ENCODE measurements at regions of chr9 and their contacts with region 1.

Region 1: GRCh38 chr9:84697509-84698114 is 28.1 kb downstream of the NTRK2 start:
- DNase-seq: peak; percentile 83
- H3K4me3 ChIP-seq: no peak overlapping the region
- H3K27ac ChIP-seq: no peak overlapping the region
- H3K4me1 ChIP-seq: no peaks in the 10 kb centered on the region
- H3K27me3 ChIP-seq: no peaks in the 10 kb centered on the region
- CTCF ChIP-seq: peak; percentile 64

Region 2: DNA sequence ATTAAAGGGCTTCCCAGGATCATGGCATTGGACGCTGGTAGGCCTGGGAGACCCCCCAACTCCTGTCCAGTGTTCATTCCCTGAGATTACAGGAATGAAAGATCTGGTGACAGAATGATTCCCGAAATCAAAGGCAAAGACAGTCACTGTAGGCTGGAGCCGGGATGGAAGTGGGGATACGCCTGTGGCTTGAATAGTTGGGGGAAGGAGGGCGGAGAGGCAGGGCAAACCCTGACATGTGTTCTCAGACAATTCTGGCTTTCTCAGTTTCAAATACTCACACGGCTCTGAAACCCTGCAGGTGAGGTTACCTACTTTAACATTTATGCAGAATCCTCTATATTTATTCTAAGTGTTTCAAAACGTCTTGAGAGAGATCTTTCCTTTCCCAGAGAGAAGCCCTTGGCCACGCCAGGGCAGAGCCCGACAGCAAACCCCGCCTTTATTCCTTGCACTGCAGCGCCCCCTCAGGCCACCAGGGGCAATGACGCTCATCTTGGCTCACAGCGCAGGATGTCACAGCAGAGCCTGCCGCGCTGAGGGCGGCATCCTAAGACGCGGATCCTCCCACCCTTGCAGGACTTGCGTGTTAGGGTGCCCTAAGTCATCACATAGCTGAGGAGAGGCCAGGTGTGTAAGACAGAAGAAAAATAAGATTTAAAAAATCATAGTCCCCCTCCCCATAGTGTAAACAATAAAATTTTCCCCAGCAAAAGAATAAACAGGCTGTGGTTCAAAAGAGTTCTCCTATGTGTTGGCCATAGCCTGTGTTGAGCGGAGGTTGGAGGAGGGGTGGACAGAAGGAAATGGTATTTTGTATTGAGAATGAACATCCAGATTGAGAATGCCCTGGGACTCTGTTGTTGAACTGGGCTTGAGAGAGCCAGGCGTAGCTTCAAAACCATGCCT is 256.4 kb after region 1 on chr9:
- intact Hi-C with region 1: loop called (anchors 2 kb)
- DNase-seq: peak; percentile 86
- H3K4me3 ChIP-seq: no peak overlapping the region
- H3K27ac ChIP-seq: no peak overlapping the region
- H3K4me1 ChIP-seq: no peaks in the 10 kb centered on the region
- H3K27me3 ChIP-seq: no peaks in the 10 kb centered on the region
- CTCF ChIP-seq: peak; percentile 93

Region 3: DNA sequence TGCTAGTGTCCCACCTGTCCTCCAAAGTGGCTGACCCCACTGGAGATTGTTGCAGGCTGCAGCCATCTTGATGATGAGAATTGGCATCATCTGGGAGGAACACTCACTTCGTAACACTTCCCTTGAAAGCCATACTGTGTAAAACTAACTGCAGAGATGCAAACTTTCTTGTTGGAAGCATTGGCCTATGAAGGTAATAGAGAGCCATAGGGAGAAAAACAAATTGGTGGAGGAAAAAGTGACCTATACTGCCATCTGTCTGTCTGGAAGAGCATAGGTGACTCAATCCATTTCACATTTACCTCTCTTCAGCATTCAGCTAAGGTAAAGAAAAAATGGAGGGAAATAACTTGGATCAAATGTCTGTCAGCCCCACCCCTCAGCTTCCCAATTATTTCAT is 445.4 kb after region 1 on chr9:
- intact Hi-C with region 1: loop called (anchors 10 kb)
- DNase-seq: no peak
- H3K4me3 ChIP-seq: no peak overlapping the region
- H3K27ac ChIP-seq: no peak overlapping the region
- H3K4me1 ChIP-seq: no peaks in the 10 kb centered on the region
- H3K27me3 ChIP-seq: no peaks in the 10 kb centered on the region
- CTCF ChIP-seq: peak; percentile 49